BJ (cell line): ENCODE measurements at regions of chr1 and their contacts with region 1.

Region 1: GRCh38 chr1:157194739-157195520 is 56.7 kb upstream of the ETV3 start:
- DNase-seq: no peak
- H3K4me3 ChIP-seq: no peak overlapping the region
- H3K27me3 ChIP-seq: peaks cover 5% of the 10 kb centered on the region
- CTCF ChIP-seq: no peak

Region 2: DNA sequence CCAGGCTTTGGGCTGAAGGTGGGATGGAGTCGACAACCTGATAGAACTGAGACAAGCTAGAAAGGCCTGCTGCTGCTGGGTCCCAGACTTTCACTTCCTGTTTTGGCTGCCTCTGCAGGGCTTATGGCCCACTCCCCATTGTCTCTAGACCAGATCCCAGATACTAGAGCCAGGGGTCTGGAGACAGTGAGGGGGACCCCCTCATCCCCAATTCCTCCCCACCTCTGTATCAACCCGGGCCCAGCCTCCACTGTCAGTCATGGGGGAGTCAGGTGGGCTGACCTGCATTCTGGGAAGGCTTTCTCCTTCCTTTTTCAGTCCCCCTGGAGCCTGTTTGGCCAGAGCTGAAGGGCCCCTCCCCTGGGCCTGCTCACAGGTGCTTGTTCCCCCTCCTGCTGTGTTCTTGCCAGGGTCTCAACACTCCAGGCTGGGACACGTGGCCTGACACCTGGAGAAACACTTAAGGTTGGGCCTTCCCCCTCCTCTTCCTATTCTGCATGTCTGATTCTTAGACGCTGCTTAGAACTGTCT is 77.3 kb before region 1 on chr1:
- CTCF ChIA-PET with region 1: no interaction called
- POLR2A ChIA-PET with region 1: no interaction called
- DNase-seq: no peak
- H3K4me3 ChIP-seq: no peak overlapping the region
- H3K27me3 ChIP-seq: peaks cover 7% of the 10 kb centered on the region
- CTCF ChIP-seq: no peak

Region 3: GRCh38 chr1:157183870-157184269 is 11.1 kb before region 1 on chr1:
- CTCF ChIA-PET with region 1: interaction called, 17 read pairs
- POLR2A ChIA-PET with region 1: no interaction called
- DNase-seq: no peak
- H3K4me3 ChIP-seq: no peak overlapping the region
- H3K27me3 ChIP-seq: peaks cover 3% of the 10 kb centered on the region
- CTCF ChIP-seq: no peak

Region 4: GRCh38 chr1:157496121-157496526 is 301.2 kb after region 1 on chr1:
- CTCF ChIA-PET with region 1: interaction called, 13 read pairs
- POLR2A ChIA-PET with region 1: no interaction called
- DNase-seq: no peak
- H3K4me3 ChIP-seq: no peak overlapping the region
- H3K27me3 ChIP-seq: 0 out of 2 replicates have a peak, but pooled peaks cover 2% of the 10 kb centered on the region
- CTCF ChIP-seq: peak; percentile 88